Vagina (tissue), 2 donors: ENCODE measurements at regions of chr10 and their contacts with region 1.

Region 1: GRCh38 chr10:91220194-91220953 is at the start of gene PCGF5:
- DNase-seq: no peak
- H3K4me3 ChIP-seq: peak within 1 kb of the TSS; percentile 89 to 98
- H3K27ac ChIP-seq: peak within 1 kb of the TSS; percentile 93
- H3K4me1 ChIP-seq: peaks cover 38% of the 10 kb centered on the region
- H3K27me3 ChIP-seq: no peaks in the 10 kb centered on the region
- CTCF ChIP-seq: peak in 2 of 3 experiments; percentile 14 to 44
- POLR2A ChIP-seq: peak in 1 of 2 donors; percentile 40
- total RNA-seq, gene PCGF5: 45.4 TPM

Region 2: DNA sequence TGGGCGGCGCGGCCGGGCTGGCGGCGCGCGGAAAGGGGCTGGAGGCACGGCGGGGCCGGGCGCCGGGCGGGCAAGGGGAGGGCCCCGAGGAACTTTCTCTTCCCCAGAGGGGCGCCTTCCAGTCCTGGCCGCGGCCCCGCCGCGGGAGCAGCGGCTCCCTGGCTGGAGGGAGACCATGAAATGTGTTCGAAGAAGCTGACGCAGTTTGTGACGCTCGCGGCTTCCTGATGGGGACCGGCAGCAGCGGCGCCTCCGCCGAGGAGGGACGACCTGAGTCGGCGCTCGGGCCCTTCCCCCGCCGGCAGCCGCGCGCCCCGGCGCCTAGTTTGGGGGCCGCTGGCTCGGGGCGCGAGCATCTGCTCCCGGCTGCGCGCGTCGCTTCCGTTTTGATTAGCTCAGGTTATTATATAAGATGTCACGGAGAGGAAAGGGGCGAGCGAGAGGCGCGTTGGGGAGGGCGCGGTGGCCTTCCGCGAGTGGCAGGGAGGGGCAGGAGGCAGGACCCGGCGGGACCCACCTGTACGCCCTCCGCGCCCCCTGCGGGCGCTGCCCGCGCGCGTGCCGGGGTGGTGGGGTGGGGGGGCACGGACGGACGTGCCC is 57.0 kb before region 1 on chr10:
- intact Hi-C with region 1: loop called (anchors 10 kb)
- DNase-seq: no peak
- H3K4me3 ChIP-seq: peak overlapping the region; percentile 87 to 91
- H3K27ac ChIP-seq: peak overlapping the region; percentile 92
- H3K4me1 ChIP-seq: peaks cover 19% of the 10 kb centered on the region
- H3K27me3 ChIP-seq: no peaks in the 10 kb centered on the region
- CTCF ChIP-seq: no peak
- POLR2A ChIP-seq: no peak